Activated T-helper 2 cell treated with anti-CD3 and anti-CD28 coated beads, Interferon-gamma antibody, Interleukin-2, Interleukin-4, amounts not matched to agents 10 μg/mL and 5 μg/mL and 100 μg/mL, durations not matched to agents 14 hours and 24 hours and 36 hours (primary cell): ENCODE measurements at regions of chr19 and their contacts with region 1.

Region 1: DNA sequence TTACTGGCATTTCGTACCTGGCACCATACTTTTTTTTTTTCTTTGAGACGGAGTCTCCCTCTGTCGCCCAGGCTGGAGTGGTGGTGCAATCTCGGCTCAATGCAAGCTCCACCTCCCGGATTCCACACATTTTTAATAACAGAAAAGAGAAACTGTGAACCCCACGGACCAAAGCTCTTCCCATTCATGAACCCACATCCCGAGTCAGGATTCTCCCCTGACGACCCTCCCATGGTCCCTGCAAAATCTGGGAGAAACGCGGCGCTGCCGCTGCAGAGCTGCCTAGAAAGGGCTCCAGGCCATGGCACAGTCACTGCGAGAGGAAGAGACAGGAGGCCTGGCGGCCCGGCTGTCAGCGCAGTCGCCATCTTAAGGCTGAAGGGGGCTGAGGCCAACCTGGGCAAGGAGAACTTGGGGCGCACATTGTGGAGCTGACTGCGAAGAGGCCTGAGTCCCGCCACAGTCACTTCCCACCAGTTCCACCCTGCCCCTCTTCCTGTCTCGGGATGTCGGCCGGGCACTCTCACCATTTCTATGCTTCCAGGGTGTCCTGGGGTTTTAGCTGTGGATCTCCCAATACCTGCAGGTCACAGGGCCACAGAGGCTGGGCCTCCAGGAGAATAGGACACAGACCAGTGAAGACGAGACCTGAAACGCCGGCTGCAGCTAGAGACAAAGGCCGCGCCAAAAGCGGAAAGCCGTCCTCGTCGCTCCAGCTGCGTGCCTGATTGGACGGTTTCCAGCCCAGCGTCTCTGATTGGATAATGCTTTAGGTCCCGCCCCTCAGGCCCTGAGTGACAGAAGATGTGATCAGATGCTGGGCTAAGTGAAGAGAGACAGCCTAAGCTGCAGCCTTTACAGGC is 71.0 kb downstream of the ZNF486 start:
- DNase-seq: peak; percentile 76
- H3K4me3 Mint-ChIP-seq: peak overlapping the region; percentile 84
- H3K27ac Mint-ChIP-seq: peak overlapping the region; percentile 73
- H3K4me1 Mint-ChIP-seq: no peaks in the 10 kb centered on the region
- H3K27me3 Mint-ChIP-seq: no peaks in the 10 kb centered on the region

Region 2: GRCh38 chr19:19997656-19998268 is 240.2 kb before region 1 on chr19:
- intact Hi-C with region 1: no loop called
- DNase-seq: no peak
- H3K4me3 Mint-ChIP-seq: no peak overlapping the region
- H3K27ac Mint-ChIP-seq: no peak overlapping the region
- H3K4me1 Mint-ChIP-seq: no peaks in the 10 kb centered on the region
- H3K27me3 Mint-ChIP-seq: no peaks in the 10 kb centered on the region

Region 3: GRCh38 chr19:20167020-20167644 is 70.9 kb before region 1 on chr19 and contains the start of gene ZNF486:
- intact Hi-C with region 1: loop called (anchors 1 kb)
- DNase-seq: peak; percentile 82
- H3K4me3 Mint-ChIP-seq: peak within 1 kb of the TSS; percentile 96
- H3K27ac Mint-ChIP-seq: peak within 1 kb of the TSS; percentile 93
- H3K4me1 Mint-ChIP-seq: peaks cover 2% of the 10 kb centered on the region
- H3K27me3 Mint-ChIP-seq: no peaks in the 10 kb centered on the region
- total RNA-seq, gene ZNF486: 3.9 and 4.2 TPM in 2 replicates

Region 4: GRCh38 chr19:20209051-20209450 is 28.9 kb before region 1 on chr19:
- intact Hi-C with region 1: no loop called
- DNase-seq: no peak
- H3K4me3 Mint-ChIP-seq: no peak overlapping the region
- H3K27ac Mint-ChIP-seq: no peak overlapping the region
- H3K4me1 Mint-ChIP-seq: no peaks in the 10 kb centered on the region
- H3K27me3 Mint-ChIP-seq: no peaks in the 10 kb centered on the region

Region 5: GRCh38 chr19:20287070-20287469 is 49.1 kb after region 1 on chr19:
- intact Hi-C with region 1: no loop called
- DNase-seq: no peak
- H3K4me3 Mint-ChIP-seq: no peak overlapping the region
- H3K27ac Mint-ChIP-seq: no peak overlapping the region
- H3K4me1 Mint-ChIP-seq: no peaks in the 10 kb centered on the region
- H3K27me3 Mint-ChIP-seq: no peaks in the 10 kb centered on the region

Region 6: DNA sequence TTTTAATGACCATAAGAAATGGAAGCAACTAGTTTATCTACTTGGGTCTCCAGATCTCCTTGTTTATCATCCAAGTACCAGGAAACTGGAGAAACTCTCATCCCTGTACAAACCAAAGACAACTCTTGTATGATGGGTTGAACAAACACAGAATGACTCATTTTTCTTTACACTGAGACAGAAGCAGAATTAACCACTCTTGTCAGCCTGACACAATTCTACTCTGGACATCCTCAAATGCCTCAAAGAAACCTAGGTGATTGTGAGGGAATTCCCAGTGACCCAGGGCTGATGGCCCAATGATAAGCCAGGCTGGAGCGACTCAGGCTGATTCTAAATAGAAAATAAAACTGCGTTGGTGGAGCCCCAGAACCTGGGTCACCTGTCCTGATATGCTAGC is 176.1 kb after region 1 on chr19:
- intact Hi-C with region 1: no loop called
- DNase-seq: no peak
- H3K4me3 Mint-ChIP-seq: no peak overlapping the region
- H3K27ac Mint-ChIP-seq: no peak overlapping the region
- H3K4me1 Mint-ChIP-seq: no peaks in the 10 kb centered on the region
- H3K27me3 Mint-ChIP-seq: no peaks in the 10 kb centered on the region